ENCODE measurements at regions of chr1 and their contacts with region 1.

Region 1: DNA sequence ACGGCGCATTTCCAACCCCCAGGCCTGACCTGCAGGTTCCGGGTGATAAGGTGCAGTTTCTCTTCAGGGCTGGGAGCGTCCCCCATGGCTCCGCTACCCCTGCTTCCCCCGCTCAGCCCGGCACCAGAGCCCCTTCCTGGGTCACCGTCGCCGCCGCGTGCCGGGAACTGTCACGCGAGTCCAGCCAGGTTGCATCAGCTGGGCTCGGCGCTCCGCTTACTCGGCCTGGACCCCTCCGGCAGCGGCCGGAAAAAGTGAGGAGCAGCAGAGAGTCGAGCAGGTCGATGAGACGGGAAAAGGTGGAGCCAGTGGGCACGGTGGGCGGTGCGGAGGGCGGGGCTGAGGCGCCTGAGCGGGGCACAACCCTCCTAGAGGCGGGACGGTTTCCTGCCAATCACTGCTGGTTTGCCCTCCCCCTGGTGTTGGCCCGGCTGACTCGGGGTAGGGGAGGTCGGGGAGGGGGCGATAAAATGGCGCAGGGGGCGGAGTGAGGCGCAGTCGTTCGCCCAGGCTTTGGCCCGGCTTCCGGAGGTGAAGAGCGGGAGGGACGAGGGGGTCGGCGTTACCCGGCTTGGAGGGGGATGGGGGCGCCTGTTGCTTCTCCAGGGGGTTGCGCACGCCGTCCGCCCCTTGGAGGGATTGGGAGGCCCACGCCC is at the starts of genes S100PBP and YARS1:
- DNase-seq: peak; percentile 98 to 100 (median 99)
- ATAC-seq: peak; percentile 99
- H3K4me3 ChIP-seq: peak within 1 kb of the TSS; percentile 86
- H3K4me3 Mint-ChIP-seq: peak within 1 kb of the TSS; percentile 85 to 99 (median 96)
- H3K27ac ChIP-seq: peak within 1 kb of the TSS; percentile 85
- H3K27ac Mint-ChIP-seq: peak within 1 kb of the TSS; percentile 82 to 96 (median 92)
- H3K4me1 ChIP-seq: peaks cover 26 to 36% of the 10 kb centered on the region in 2 donors
- H3K4me1 Mint-ChIP-seq: peaks cover 35 to 72% (median 59%) of the 10 kb centered on the region in 7 donors
- H3K27me3 ChIP-seq: no peaks in the 10 kb centered on the region
- H3K27me3 Mint-ChIP-seq: no peaks in the 10 kb centered on the region
- total RNA-seq, gene S100PBP: 36.3 to 69.0 (median 60.2) TPM
- total RNA-seq, gene YARS1: 70.2 to 175 (median 86.8) TPM

Region 2: GRCh38 chr1:31644560-31645273 is 1172.6 kb before region 1 on chr1 and contains the start of gene PEF1:
- CTCF ChIA-PET with region 1: no interaction called
- POLR2A ChIA-PET with region 1: no interaction called
- intact Hi-C with region 1: loop called in 1 of 2 experiments (anchors 2 kb)
- DNase-seq: peak; percentile 97 to 100 (median 99)
- ATAC-seq: peak; percentile 94
- H3K4me3 ChIP-seq: peak within 1 kb of the TSS; percentile 91
- H3K4me3 Mint-ChIP-seq: peak within 1 kb of the TSS; percentile 92 to 100 (median 98)
- H3K27ac ChIP-seq: peak within 1 kb of the TSS; percentile 98
- H3K27ac Mint-ChIP-seq: peak within 1 kb of the TSS; percentile 98 to 100 (median 99)
- H3K4me1 ChIP-seq: peaks cover 27 to 30% of the 10 kb centered on the region in 2 donors
- H3K4me1 Mint-ChIP-seq: peaks cover 18 to 47% (median 40%) of the 10 kb centered on the region in 7 donors
- H3K27me3 ChIP-seq: no peaks in the 10 kb centered on the region
- H3K27me3 Mint-ChIP-seq: no peaks in the 10 kb centered on the region
- total RNA-seq, gene PEF1: 37.7 to 49.8 (median 40.8) TPM

Region 3: GRCh38 chr1:32351399-32352238 is 465.7 kb before region 1 on chr1:
- CTCF ChIA-PET with region 1: no interaction called
- POLR2A ChIA-PET with region 1: no interaction called
- intact Hi-C with region 1: loop called in 1 of 2 experiments (anchors 2 kb)
- DNase-seq: peak; percentile 83 to 93 (median 92)
- ATAC-seq: peak; percentile 97
- H3K4me3 ChIP-seq: peak overlapping the region; percentile 62
- H3K4me3 Mint-ChIP-seq: peak overlapping the region; percentile 68 to 90 (median 85)
- H3K27ac ChIP-seq: peak overlapping the region; percentile 75
- H3K27ac Mint-ChIP-seq: peak overlapping the region; percentile 63 to 96 (median 91)
- H3K4me1 ChIP-seq: peaks cover 4 to 19% of the 10 kb centered on the region in 2 donors
- H3K4me1 Mint-ChIP-seq: peaks cover 35 to 65% (median 53%) of the 10 kb centered on the region in 7 donors
- H3K27me3 ChIP-seq: no peaks in the 10 kb centered on the region
- H3K27me3 Mint-ChIP-seq: peaks cover 0 to under 1% (median 0%) of the 10 kb centered on the region in 5 donors

Region 4: DNA sequence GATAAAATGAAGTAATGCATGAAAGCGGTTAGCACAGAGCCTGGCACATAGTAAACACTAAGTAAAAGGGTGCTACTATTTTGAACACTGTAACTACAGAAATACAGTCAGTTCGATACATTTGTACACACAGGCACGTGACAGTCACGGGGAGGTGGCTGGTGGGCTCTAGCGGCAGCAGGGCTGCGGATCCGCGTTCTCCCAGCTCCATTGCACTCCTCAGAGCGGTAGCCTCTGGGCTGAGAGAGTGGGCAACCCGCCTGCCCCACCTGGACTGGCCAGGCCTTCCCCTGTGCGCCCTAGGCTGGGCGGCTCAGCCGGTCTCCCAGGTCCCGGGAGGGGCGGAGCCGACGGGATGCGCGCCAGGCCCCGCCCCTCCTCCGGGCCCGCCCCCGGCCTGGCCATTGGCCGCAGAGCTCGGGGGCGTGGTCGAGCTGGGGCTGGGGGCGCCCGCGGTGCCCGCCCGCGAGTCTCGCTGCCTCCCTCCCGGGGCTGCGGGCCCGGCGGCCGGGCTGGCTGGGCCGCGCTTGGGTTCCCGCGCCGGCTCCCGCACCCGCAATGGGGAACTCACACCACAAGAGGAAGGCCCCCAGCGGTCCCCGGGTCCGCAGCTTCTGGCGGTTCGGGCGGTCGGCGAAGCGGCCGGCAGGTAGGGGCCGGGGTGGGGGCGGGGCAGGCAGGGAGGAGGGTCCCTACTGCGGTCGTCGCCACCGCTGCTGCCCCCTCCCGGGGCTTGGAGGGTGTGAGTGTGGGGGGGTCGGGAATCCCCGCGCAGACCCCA is 63.6 kb before region 1 on chr1:
- CTCF ChIA-PET with region 1: no interaction called
- POLR2A ChIA-PET with region 1: no interaction called
- intact Hi-C with region 1: loop called in 1 of 2 experiments (anchors 1 kb)
- DNase-seq: peak; percentile 51 to 81 (median 66)
- ATAC-seq: peak; percentile 90
- H3K4me3 ChIP-seq: peak overlapping the region; percentile 65
- H3K4me3 Mint-ChIP-seq: peak overlapping the region; percentile 75 to 91 (median 82)
- H3K27ac ChIP-seq: peak overlapping the region; percentile 39
- H3K27ac Mint-ChIP-seq: peak overlapping the region in 7 of 9 donors; percentile 70 to 91 (median 83)
- H3K4me1 ChIP-seq: peaks cover under 1 to 4% of the 10 kb centered on the region in 2 donors
- H3K4me1 Mint-ChIP-seq: peaks cover 0 to 29% (median 17%) of the 10 kb centered on the region in 7 donors
- H3K27me3 ChIP-seq: no peaks in the 10 kb centered on the region
- H3K27me3 Mint-ChIP-seq: peaks cover 0 to 53% (median 4%) of the 10 kb centered on the region in 5 donors

Region 5: DNA sequence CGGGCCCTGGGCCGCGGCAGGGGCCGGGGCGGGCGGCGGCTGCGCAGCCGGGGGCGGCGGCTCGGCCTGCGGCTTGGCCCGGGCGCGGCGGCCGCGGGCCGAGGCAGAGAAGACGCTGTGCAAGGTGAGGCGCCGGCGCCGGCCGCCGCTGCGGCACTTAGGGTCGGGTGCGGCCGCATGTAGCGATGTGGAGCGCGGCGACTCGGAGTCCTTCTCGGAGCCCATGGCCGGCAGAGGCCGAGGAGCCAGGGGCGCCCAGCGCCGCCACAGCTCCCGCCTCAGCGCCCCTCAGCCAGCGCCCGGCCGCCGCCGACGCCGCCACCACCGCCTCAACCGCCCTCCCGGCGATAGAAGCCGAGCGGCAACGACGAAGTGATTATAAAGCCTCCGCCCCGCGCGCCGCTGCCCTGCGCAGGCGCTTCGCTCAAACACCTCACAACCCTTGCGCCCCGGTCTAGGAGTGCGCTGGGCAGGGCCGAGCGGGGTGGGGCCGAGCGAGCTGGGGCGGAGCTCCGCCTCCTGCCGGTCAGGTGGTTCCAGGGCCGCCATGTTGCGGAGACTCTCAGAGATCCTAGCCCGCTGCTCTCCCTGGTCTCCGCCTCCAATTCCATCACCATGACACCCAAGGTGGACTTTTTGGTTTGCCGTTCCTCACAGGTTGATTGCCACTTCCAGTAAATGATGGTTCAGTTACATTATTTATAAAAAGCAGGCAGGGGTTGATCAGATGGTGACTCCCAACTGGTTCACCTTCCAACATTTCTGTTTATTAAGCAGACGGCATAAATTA is 147.4 kb after region 1 on chr1 and contains the start of gene RNF19B:
- CTCF ChIA-PET with region 1: no interaction called
- POLR2A ChIA-PET with region 1: interaction called, 3 read pairs
- intact Hi-C with region 1: loop called in 1 of 2 experiments (anchors 2 kb)
- DNase-seq: peak; percentile 85 to 94 (median 90)
- ATAC-seq: peak; percentile 97
- H3K4me3 ChIP-seq: peak within 1 kb of the TSS; percentile 67
- H3K4me3 Mint-ChIP-seq: peak within 1 kb of the TSS; percentile 88 to 93 (median 91)
- H3K27ac ChIP-seq: peak within 1 kb of the TSS; percentile 74
- H3K27ac Mint-ChIP-seq: peak within 1 kb of the TSS; percentile 71 to 96 (median 90)
- H3K4me1 ChIP-seq: peaks cover 19 to 24% of the 10 kb centered on the region in 2 donors
- H3K4me1 Mint-ChIP-seq: peaks cover 23 to 50% (median 37%) of the 10 kb centered on the region in 7 donors
- H3K27me3 ChIP-seq: no peaks in the 10 kb centered on the region
- H3K27me3 Mint-ChIP-seq: peaks cover 0 to 3% (median 0%) of the 10 kb centered on the region in 5 donors
- total RNA-seq, gene RNF19B: 17.1 to 58.1 (median 39.2) TPM

Region 6: GRCh38 chr1:33080885-33081553 is 263.7 kb after region 1 on chr1 and contains the start of gene AZIN2:
- CTCF ChIA-PET with region 1: no interaction called
- POLR2A ChIA-PET with region 1: interaction called, 3 read pairs
- intact Hi-C with region 1: loop called in 1 of 2 experiments (anchors 1 kb)
- DNase-seq: peak; percentile 94 to 99 (median 95)
- ATAC-seq: peak; percentile 99
- H3K4me3 ChIP-seq: peak within 1 kb of the TSS; percentile 68
- H3K4me3 Mint-ChIP-seq: peak within 1 kb of the TSS; percentile 81 to 88 (median 86)
- H3K27ac ChIP-seq: peak within 1 kb of the TSS; percentile 66
- H3K27ac Mint-ChIP-seq: peak within 1 kb of the TSS; percentile 6 to 91 (median 72)
- H3K4me1 ChIP-seq: peaks cover 14 to 15% of the 10 kb centered on the region in 2 donors
- H3K4me1 Mint-ChIP-seq: peaks cover 20 to 40% (median 35%) of the 10 kb centered on the region in 7 donors
- H3K27me3 ChIP-seq: no peaks in the 10 kb centered on the region
- H3K27me3 Mint-ChIP-seq: peaks cover 0 to 30% (median 0%) of the 10 kb centered on the region in 5 donors
- total RNA-seq, gene AZIN2: 5.3 to 9.6 (median 9.0) TPM

Region 7: DNA sequence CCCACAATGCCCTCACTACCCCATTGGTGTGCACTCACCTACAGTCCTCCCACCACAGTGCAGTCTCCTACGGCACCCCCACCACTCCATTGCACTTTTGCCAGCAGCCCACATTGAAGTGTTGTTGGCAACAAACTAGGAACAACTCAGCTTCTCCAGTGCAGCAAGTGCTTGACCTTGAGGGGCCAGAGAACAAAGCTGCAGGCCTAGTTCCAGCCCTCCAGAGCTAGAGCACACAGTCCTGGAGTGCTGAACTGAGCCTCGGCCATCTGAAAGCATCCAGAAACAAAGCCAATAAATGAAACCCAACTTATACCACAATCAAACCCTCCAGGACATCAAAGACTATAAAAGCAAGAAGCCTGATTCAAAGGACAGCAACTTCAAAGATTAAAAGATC is 1489.3 kb after region 1 on chr1:
- CTCF ChIA-PET with region 1: no interaction called
- POLR2A ChIA-PET with region 1: no interaction called
- intact Hi-C with region 1: no loop called
- DNase-seq: no peak
- ATAC-seq: no peak
- H3K4me3 ChIP-seq: no peak overlapping the region
- H3K4me3 Mint-ChIP-seq: no peak overlapping the region
- H3K27ac ChIP-seq: no peak overlapping the region
- H3K27ac Mint-ChIP-seq: no peak overlapping the region
- H3K4me1 ChIP-seq: no peaks in the 10 kb centered on the region
- H3K4me1 Mint-ChIP-seq: no peaks in the 10 kb centered on the region
- H3K27me3 ChIP-seq: no peaks in the 10 kb centered on the region
- H3K27me3 Mint-ChIP-seq: peaks cover under 1 to 36% (median 30%) of the 10 kb centered on the region in 5 donors